Endothelial cell of umbilical vein (primary cell): ENCODE measurements at regions of chr7 and their contacts with region 1.

Region 1: DNA sequence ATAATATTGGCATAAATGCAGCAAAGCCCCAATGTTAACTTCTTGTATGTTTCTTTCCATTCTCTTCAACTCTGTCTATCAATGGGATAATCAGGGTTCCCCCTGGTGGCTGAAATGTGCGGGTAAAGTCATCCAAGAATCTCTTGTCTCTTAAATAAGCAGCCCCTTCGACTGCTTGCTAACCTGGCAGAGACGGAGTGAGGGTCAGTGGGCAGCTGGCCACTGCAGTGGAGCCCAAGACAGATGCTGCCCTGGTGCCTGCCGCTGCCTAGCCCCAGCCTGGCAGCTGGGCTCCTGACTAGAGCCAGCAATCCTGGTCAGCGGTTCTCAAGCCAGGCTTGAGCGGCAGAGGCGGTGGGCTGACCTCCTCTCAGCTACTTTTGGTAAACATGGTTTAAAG is 248.9 kb downstream of the COBL start:
- DNase-seq: peak; percentile 89
- H3K4me3 ChIP-seq: no peak overlapping the region
- H3K27ac ChIP-seq: no peak overlapping the region
- H3K4me1 ChIP-seq: peaks cover 26% of the 10 kb centered on the region
- H3K27me3 ChIP-seq: no peaks in the 10 kb centered on the region
- CTCF ChIP-seq: peak; percentile 69 to 70
- POLR2A ChIP-seq: no peak

Region 2: GRCh38 chr7:50449881-50450589 is 617.7 kb before region 1 on chr7 and contains the start of gene FIGNL1:
- CTCF ChIA-PET with region 1: no interaction called
- POLR2A ChIA-PET with region 1: no interaction called
- dilution Hi-C with region 1: no loop called
- intact Hi-C with region 1: loop called (anchors 5 kb)
- DNase-seq: peak; percentile 78
- H3K4me3 ChIP-seq: peak within 1 kb of the TSS; percentile 44 to 98 (median 64)
- H3K27ac ChIP-seq: peak within 1 kb of the TSS; percentile 66
- H3K4me1 ChIP-seq: peaks cover 38% of the 10 kb centered on the region
- H3K27me3 ChIP-seq: peaks cover 0 to 5% of the 10 kb centered on the region in 2 experiments
- CTCF ChIP-seq: no peak
- POLR2A ChIP-seq: peak; percentile 79
- total RNA-seq, gene FIGNL1: 37.2 and 49.3 TPM in 2 replicates

Region 3: DNA sequence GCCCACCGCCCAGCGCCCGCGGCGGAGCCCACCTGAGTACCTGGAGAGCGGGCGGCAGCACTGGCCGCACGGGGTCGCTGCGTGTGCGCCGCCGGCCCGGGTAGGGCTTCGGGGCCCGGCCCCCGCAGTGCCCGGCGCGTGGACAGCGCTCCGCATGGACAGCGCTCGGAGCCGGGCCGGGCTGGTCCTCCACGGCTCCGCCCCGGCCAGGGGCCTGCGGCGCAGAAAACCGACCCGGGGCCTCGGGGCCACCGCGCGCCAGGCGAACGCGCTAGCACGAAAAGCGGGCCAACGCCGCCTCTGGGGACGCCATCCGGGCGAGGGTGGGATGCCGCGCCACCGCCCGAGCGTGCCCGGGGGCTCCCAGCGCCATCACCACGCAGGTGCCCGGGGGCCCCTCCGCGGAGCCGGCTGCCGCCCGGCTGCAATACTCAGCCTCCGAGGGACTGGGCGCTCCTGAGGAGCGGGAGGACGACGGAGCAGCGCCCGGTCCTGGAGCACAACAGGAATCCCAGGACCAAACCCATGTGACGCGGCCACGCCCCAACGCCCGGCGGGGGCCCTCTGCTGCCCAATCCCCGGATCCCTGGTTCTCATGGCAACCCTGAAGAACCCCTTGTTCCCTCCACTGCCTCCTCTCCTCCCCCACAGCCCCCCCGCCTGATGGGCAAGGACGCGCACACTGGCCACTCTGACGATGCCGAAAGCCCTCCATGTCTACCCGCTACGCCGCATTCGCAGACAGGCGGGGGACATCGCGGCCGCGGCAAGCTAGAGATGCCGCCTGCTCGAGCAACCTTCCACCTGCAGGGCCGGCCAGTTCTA is 285.2 kb before region 1 on chr7 and contains the start of gene GRB10:
- CTCF ChIA-PET with region 1: interaction called, 4 read pairs
- POLR2A ChIA-PET with region 1: no interaction called
- dilution Hi-C with region 1: no loop called
- intact Hi-C with region 1: loop called (anchors 2 kb)
- DNase-seq: peak; percentile 35
- H3K4me3 ChIP-seq: peak within 1 kb of the TSS in 2 of 3 experiments; percentile 25 to 41
- H3K27ac ChIP-seq: no peak within 1 kb of the TSS
- H3K4me1 ChIP-seq: peaks cover 4% of the 10 kb centered on the region
- H3K27me3 ChIP-seq: no peaks in the 10 kb centered on the region
- CTCF ChIP-seq: peak; percentile 12 to 32
- POLR2A ChIP-seq: no peak
- total RNA-seq, gene GRB10: 240 and 243 TPM in 2 replicates

Region 4: DNA sequence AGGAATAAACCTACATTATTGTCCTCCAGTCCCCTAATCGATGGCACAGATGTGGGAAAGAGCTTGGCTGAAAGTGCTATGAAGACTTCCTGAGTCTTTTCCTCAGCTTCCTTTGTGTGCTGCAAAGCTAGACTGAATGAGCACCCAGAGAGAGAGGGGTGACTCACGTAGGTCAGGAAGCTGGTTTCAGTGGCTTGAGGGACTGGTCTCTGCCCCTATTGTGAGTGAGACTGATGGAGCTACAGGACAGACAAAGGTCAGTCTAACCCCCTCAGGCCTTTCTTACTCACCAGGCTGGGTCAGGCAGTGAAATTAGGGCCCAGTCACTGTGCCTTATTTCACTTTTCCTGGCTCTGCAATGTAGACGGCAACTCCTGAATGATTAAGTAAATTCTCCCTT is 113.9 kb before region 1 on chr7:
- CTCF ChIA-PET with region 1: no interaction called
- POLR2A ChIA-PET with region 1: no interaction called
- dilution Hi-C with region 1: no loop called
- intact Hi-C with region 1: loop called (anchors 1 kb)
- DNase-seq: peak; percentile 81
- H3K4me3 ChIP-seq: no peak overlapping the region
- H3K27ac ChIP-seq: peak overlapping the region; percentile 85
- H3K4me1 ChIP-seq: peaks cover 57% of the 10 kb centered on the region
- H3K27me3 ChIP-seq: no peaks in the 10 kb centered on the region
- CTCF ChIP-seq: no peak
- POLR2A ChIP-seq: peak; percentile 33

Region 5: GRCh38 chr7:51134013-51134441 is 66.3 kb after region 1 on chr7:
- CTCF ChIA-PET with region 1: interaction called, 5 read pairs
- POLR2A ChIA-PET with region 1: no interaction called
- dilution Hi-C with region 1: no loop called
- intact Hi-C with region 1: loop called (anchors 1 kb)
- DNase-seq: peak; percentile 93
- H3K4me3 ChIP-seq: no peak overlapping the region
- H3K27ac ChIP-seq: peak overlapping the region; percentile 72
- H3K4me1 ChIP-seq: peaks cover 20% of the 10 kb centered on the region
- H3K27me3 ChIP-seq: no peaks in the 10 kb centered on the region
- CTCF ChIP-seq: no peak
- POLR2A ChIP-seq: no peak